H1 (cell line): ENCODE measurements at regions of chr6 and their contacts with region 1.

Region 1: GRCh38 chr6:43070028-43070632 is 6.0 kb upstream of the PTK7 start:
- DNase-seq: no peak
- H3K4me3 ChIP-seq: no peak overlapping the region
- H3K27ac ChIP-seq: no peak overlapping the region
- H3K4me1 ChIP-seq: peaks cover 0 to 8% (median 3%) of the 10 kb centered on the region in 4 experiments; a peak in 4 of 7 replicates
- H3K27me3 ChIP-seq: no peaks in the 10 kb centered on the region
- CTCF ChIP-seq: peak; percentile 25 to 73 (median 48)
- EP300 ChIP-seq: no peak
- POLR2A ChIP-seq: no peak
- RAD21 ChIP-seq: peak; percentile 81

Region 2: DNA sequence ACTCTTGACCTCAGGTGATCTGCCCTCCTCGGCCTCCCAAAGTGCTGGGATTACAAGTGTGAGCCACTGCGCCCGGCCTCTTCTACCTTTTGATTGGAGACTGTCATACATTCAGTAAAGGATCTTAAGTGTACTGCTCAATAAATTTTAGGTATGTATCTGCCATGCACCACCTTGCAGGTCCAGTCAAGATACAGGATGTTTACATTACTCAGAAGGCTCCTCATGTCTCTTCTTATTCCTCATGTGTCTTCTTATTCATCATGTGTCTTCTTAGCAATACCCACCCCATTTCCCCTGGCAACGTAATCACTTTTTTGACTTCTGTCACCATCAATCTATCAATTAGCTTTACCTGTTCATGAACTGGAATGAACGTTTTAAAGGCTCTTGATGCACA is 64.3 kb before region 1 on chr6:
- CTCF ChIA-PET with region 1: no interaction called
- POLR2A ChIA-PET with region 1: no interaction called
- DNase-seq: no peak
- H3K4me3 ChIP-seq: no peak overlapping the region
- H3K27ac ChIP-seq: no peak overlapping the region
- H3K4me1 ChIP-seq: no peaks in the 10 kb centered on the region
- H3K27me3 ChIP-seq: no peaks in the 10 kb centered on the region
- CTCF ChIP-seq: no peak
- EP300 ChIP-seq: no peak
- POLR2A ChIP-seq: no peak
- RAD21 ChIP-seq: no peak

Region 3: GRCh38 chr6:43120944-43121913 is 51.1 kb after region 1 on chr6:
- CTCF ChIA-PET with region 1: interaction called, 29 read pairs
- POLR2A ChIA-PET with region 1: no interaction called
- DNase-seq: no peak
- H3K4me3 ChIP-seq: no peak overlapping the region
- H3K27ac ChIP-seq: no peak overlapping the region
- H3K4me1 ChIP-seq: peaks cover 2 to 17% (median 9%) of the 10 kb centered on the region in 4 experiments
- H3K27me3 ChIP-seq: no peaks in the 10 kb centered on the region
- CTCF ChIP-seq: no peak
- EP300 ChIP-seq: no peak
- POLR2A ChIP-seq: no peak
- RAD21 ChIP-seq: peak in 1 of 2 experiments; percentile 11; a peak in 1 of 4 replicates

Region 4: DNA sequence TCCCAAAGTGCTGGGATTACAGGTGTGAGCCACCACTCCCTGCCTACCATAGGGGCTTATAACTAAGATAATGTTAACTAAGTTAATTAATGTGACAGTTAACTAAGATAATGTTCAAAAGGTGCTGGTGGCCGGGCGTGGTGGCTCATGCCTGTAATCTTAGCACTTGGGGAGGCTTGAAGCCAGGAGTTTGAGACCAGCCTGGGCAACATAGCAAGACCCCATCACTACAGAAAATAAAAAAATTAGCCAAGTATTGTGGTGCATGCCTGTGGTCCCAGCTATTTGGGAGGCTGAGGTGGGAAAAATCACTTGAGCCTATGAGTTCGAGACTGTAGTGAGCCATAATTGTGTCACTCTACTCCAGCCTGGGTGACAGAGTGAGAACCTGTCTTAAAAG is 68.1 kb after region 1 on chr6:
- CTCF ChIA-PET with region 1: interaction called, 31 read pairs
- POLR2A ChIA-PET with region 1: interaction called, 30 read pairs
- DNase-seq: no peak
- H3K4me3 ChIP-seq: no peak overlapping the region
- H3K27ac ChIP-seq: no peak overlapping the region
- H3K4me1 ChIP-seq: peaks cover 0 to 5% (median 2%) of the 10 kb centered on the region in 4 experiments; a peak in 3 of 7 replicates
- H3K27me3 ChIP-seq: no peaks in the 10 kb centered on the region
- CTCF ChIP-seq: no peak
- EP300 ChIP-seq: no peak
- POLR2A ChIP-seq: no peak
- RAD21 ChIP-seq: no peak